HCT116 (cell line): ENCODE measurements at regions of chr3 and their contacts with region 1.

Region 1: DNA sequence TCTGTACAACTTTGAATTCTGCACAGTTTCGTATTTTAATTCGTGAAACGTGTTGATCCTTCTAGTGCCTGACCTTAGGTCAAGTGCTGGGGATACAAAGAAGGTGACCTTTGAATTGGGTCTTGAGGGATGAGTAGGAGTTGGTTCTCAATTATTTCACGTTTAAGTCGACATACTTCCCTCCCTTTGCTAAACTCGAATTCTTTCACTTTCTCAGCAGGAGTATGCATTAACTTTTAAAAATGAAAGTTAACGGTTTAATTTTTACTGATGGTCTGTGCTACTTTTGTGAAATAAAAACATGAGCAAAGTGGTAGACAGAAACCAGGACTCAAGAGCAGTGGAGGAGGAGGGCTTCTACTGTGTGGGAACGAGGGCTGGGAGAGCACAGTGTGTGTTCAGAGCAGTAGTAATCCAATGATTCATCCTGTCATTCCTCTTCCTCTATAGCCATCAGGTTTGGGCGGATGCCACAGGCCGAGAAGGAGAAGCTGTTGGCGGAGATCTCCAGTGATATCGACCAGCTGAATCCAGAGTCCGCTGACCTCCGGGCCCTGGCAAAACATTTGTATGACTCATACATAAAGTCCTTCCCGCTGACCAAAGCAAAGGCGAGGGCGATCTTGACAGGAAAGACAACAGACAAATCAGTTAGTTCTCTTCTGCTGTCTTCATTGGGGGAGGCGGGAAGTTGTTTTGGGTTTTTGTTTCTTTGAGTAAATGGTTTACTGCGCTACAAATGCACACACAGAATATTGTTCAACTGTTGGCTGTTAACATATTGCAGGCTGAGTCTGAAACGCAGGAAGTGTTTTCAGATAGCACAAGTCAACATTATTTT is 78.6 kb upstream of the TSEN2 start:
- DNase-seq: peak; percentile 92
- ATAC-seq: peak; percentile 97
- H3K4me3 ChIP-seq: peak overlapping the region; percentile 6 to 42; a peak in 3 of 4 replicates
- H3K27ac ChIP-seq: peak overlapping the region; percentile 48
- H3K4me1 ChIP-seq: peaks cover 28 to 47% of the 10 kb centered on the region in 2 experiments
- H3K27me3 ChIP-seq: no peaks in the 10 kb centered on the region
- CTCF ChIP-seq: no peak
- POLR2A ChIP-seq: no peak
- RAD21 ChIP-seq: peak; percentile 45

Region 2: DNA sequence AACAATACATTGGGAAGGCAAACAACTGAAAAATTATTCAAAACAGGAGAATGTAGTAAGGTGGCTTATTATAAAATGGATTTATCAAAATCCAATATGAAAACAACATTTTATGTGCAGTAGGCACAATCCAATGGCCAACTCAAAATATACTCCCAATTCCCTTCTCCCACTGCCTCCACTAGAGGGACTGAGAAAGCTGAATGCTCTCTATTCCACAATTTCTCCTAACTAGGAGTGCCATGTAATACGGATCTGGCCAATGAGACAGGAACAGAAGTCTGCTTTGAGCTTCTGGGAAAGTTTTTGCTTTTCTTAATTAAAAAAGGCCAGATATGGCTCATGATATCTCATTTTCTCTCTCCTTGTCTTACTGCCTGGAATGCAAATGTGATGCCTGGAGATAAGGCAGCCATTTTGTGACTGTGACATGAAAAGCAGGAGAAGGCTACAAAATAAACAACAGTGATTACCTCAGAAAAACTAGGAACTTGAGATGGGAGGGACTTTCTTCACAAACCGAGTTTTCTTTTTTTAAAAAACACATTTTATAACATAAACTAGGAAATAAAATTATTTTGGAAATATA is 743.2 kb before region 1 on chr3:
- CTCF ChIA-PET with region 1: no interaction called
- POLR2A ChIA-PET with region 1: no interaction called
- RAD21 ChIA-PET with region 1: no interaction called
- intact Hi-C with region 1: no loop called
- DNase-seq: peak; percentile 42
- ATAC-seq: peak; percentile 94
- H3K4me3 ChIP-seq: no peak overlapping the region
- H3K27ac ChIP-seq: no peak overlapping the region
- H3K4me1 ChIP-seq: peaks cover 0 to 4% of the 10 kb centered on the region in 2 experiments; a peak in 2 of 4 replicates
- H3K27me3 ChIP-seq: no peaks in the 10 kb centered on the region
- CTCF ChIP-seq: peak; percentile 57 to 78 (median 71); a peak in 5 of 6 replicates
- POLR2A ChIP-seq: no peak
- RAD21 ChIP-seq: peak; percentile 63

Region 3: GRCh38 chr3:12444582-12445468 is 39.2 kb after region 1 on chr3:
- CTCF ChIA-PET with region 1: no interaction called
- POLR2A ChIA-PET with region 1: no interaction called
- RAD21 ChIA-PET with region 1: no interaction called
- intact Hi-C with region 1: loop called (anchors 1 kb)
- DNase-seq: peak; percentile 88
- ATAC-seq: peak; percentile 87
- H3K4me3 ChIP-seq: peak overlapping the region; percentile 36 to 47
- H3K27ac ChIP-seq: peak overlapping the region; percentile 89
- H3K4me1 ChIP-seq: peaks cover 30 to 68% of the 10 kb centered on the region in 2 experiments
- H3K27me3 ChIP-seq: no peaks in the 10 kb centered on the region
- CTCF ChIP-seq: no peak
- POLR2A ChIP-seq: no peak
- RAD21 ChIP-seq: no peak